ENCODE measurements at regions of chr5 and their contacts with region 1.

Region 1: DNA sequence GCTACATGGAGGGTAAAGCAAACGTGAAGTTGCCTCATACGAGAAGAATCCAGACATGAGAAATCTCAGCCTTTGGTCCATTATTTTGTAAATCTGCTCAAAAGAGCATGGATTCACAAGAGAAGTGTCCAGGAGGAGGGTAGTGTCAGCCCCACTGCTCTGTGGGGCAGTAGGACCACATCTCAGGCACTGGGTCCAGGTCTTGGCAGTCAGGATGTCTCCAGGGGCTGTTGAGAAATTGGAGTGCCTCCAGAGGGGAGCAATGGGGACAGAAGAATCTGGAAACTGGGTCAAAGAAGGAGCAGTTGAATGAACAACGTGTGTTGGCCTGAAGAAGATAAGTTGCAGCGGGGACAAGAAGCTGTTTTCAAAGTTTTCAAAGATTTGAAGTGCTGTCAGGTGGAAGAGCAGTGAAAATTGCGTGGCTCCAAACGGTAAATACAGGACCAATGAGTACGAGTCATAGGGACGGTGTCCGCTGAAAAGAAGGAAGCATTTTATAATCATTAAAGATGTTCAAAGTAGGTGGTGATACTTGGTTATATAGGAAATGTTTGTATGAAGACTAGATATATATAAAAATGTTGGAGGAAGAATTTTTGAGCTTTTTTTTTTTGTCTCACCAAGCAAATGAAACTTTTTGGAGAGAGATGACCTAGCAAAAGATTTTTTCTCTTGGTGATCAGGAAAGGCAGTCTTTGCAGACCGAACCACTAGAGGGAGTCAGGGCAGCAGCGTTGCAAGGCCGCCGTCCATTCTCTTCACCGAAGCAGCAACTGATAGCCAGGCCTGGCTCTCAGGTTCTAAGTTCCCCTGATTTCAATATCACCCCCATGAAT is 57.1 kb upstream of the ZBED3 start:
- DNase-seq: peak; percentile 48 to 74 (median 58)
- ATAC-seq: peak; percentile 92
- H3K4me3 ChIP-seq: no peak overlapping the region
- H3K27ac ChIP-seq: no peak overlapping the region
- H3K4me1 ChIP-seq: no peaks in the 10 kb centered on the region
- H3K27me3 ChIP-seq: peaks cover 2 to 6% of the 10 kb centered on the region in 2 experiments; a peak in 3 of 5 replicates
- CTCF ChIP-seq: peak; percentile 78 to 84 (median 82)
- EP300 ChIP-seq: no peak
- POLR2A ChIP-seq: no peak
- RAD21 ChIP-seq: peak; percentile 71 to 84

Region 2: GRCh38 chr5:76701298-76701697 is 442.9 kb before region 1 on chr5:
- CTCF ChIA-PET with region 1: no interaction called
- POLR2A ChIA-PET with region 1: no interaction called
- in situ Hi-C with region 1: no loop called
- intact Hi-C with region 1: no loop called
- DNase-seq: no peak
- ATAC-seq: no peak
- H3K4me3 ChIP-seq: no peak overlapping the region
- H3K27ac ChIP-seq: no peak overlapping the region
- H3K4me1 ChIP-seq: peaks cover 0 to 8% of the 10 kb centered on the region in 2 experiments; a peak in 3 of 5 replicates
- H3K27me3 ChIP-seq: no peaks in the 10 kb centered on the region
- CTCF ChIP-seq: no peak
- EP300 ChIP-seq: no peak
- POLR2A ChIP-seq: no peak
- RAD21 ChIP-seq: no peak

Region 3: DNA sequence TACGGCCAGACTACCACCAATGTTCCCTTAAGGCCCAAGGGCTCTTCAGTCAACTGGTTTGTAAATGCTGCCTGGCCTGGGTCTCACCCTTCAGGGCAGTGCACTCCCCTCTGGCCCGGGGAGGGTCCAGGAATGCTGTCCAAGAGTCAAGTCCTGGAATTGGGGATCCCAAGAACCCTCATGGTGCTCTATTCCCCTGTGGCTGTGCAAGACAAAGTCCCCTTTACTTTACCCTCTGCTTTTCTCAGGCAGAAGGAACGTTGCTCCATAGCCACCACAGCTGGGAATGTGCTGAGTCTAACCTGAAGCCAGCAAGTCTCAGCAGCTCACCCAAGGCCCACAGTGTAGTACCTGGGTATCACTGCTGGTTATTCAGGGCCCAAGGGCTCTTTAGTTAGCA is 242.7 kb before region 1 on chr5:
- CTCF ChIA-PET with region 1: no interaction called
- POLR2A ChIA-PET with region 1: no interaction called
- in situ Hi-C with region 1: no loop called
- intact Hi-C with region 1: no loop called
- DNase-seq: no peak
- ATAC-seq: no peak
- H3K4me3 ChIP-seq: no peak overlapping the region
- H3K27ac ChIP-seq: no peak overlapping the region
- H3K4me1 ChIP-seq: no peaks in the 10 kb centered on the region
- H3K27me3 ChIP-seq: no peaks in the 10 kb centered on the region; a peak in 1 of 5 replicates
- CTCF ChIP-seq: no peak
- EP300 ChIP-seq: no peak
- POLR2A ChIP-seq: no peak
- RAD21 ChIP-seq: no peak

Region 4: GRCh38 chr5:77491783-77492652 is 347.8 kb after region 1 on chr5 and contains the start of gene WDR41:
- CTCF ChIA-PET with region 1: no interaction called
- POLR2A ChIA-PET with region 1: interaction called, 3 read pairs
- in situ Hi-C with region 1: no loop called
- intact Hi-C with region 1: loop called (anchors 1 kb)
- DNase-seq: peak; percentile 87 to 92 (median 88)
- ATAC-seq: peak; percentile 96
- H3K4me3 ChIP-seq: peak within 1 kb of the TSS; percentile 66
- H3K27ac ChIP-seq: peak within 1 kb of the TSS; percentile 78
- H3K4me1 ChIP-seq: peaks cover 4 to 5% of the 10 kb centered on the region in 2 experiments; a peak in 1 of 5 replicates
- H3K27me3 ChIP-seq: no peaks in the 10 kb centered on the region
- CTCF ChIP-seq: peak; percentile 83 to 87 (median 85)
- EP300 ChIP-seq: no peak
- POLR2A ChIP-seq: peak; percentile 88
- RAD21 ChIP-seq: peak; percentile 77
- polyA plus RNA-seq, gene WDR41: 66.2 to 67.2 TPM

Measured in K562 (cell line).